Heart left ventricle (tissue), 16 donors: ENCODE measurements at regions of chr10 and their contacts with region 1.

Region 1: DNA sequence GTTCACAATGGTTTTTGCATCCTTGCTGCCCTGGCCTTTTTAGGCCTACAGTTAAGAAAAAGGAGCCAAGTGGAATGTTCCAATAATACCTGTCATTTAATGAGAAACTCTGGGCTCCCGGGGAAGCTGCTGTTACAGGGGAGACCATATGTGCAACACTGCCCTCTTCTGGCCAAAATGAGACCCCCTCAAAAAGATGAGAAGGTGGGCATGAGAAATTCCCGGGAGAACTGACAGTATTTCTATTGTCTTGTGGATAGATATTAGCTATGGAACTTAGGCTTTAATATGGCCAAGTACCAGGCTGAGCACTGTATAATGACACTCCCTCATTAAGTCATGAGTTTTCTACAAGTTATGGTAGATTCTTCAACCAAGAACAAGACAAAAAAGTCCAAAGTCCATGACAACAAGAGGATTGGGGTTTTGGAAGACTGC is 99.4 kb downstream of the CCDC3 start:
- DNase-seq: peak in 2 of 5 donors; percentile 30 to 48
- ATAC-seq: peak in 1 of 4 donors; percentile 45
- H3K4me3 ChIP-seq: no peak overlapping the region
- H3K27ac ChIP-seq: no peak overlapping the region
- H3K4me1 ChIP-seq: no peaks in the 10 kb centered on the region
- H3K27me3 ChIP-seq: no peaks in the 10 kb centered on the region
- CTCF ChIP-seq: peak; percentile 69 to 84 (median 78)
- POLR2A ChIP-seq: no peak

Region 2: DNA sequence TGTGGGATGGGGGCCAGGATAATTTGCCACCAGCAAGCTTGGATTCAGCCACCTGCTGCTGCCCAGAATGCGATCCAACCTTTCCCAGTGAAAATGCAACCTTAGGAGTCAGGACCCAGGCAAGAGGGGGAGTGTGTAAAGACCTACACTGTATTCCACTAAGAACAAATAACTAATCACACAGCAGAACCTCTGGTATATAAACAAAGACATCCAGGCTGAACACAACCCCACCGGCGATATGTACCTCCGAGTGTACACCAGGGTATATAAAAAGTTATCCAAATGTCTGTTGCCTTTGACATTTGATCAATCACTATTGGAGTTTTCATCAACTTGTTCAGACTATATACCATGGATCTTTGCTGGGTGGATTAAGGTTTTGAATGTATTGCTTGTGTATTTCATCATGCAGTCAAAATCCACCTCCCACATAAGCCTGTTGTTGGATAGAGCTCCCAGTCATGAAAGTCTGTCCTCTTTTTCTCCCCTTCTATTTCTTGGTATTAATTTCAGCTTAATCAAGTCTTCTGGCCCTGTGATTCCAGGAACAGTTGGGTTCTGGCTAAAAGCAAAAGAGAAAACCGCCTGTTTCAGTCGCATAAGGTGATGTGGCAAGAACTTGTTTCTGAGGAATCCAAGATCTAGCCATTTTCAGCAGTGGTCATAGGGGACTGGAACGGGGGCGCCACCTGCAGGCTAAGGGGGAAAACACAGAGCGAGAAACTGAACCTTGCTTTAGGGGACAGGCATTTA is 191.4 kb before region 1 on chr10:
- intact Hi-C with region 1: loop called in 6 of 10 experiments (anchors 5 to 10 kb)
- DNase-seq: peak; percentile 64 to 81 (median 69)
- ATAC-seq: peak; percentile 48 to 81 (median 74)
- H3K4me3 ChIP-seq: no peak overlapping the region
- H3K27ac ChIP-seq: peak overlapping the region in 2 of 12 donors; percentile 1 to 78
- H3K4me1 ChIP-seq: peaks cover 0 to 48% (median 23%) of the 10 kb centered on the region in 12 donors
- H3K27me3 ChIP-seq: no peaks in the 10 kb centered on the region
- CTCF ChIP-seq: peak; percentile 86 to 95 (median 90)
- POLR2A ChIP-seq: no peak

Region 3: DNA sequence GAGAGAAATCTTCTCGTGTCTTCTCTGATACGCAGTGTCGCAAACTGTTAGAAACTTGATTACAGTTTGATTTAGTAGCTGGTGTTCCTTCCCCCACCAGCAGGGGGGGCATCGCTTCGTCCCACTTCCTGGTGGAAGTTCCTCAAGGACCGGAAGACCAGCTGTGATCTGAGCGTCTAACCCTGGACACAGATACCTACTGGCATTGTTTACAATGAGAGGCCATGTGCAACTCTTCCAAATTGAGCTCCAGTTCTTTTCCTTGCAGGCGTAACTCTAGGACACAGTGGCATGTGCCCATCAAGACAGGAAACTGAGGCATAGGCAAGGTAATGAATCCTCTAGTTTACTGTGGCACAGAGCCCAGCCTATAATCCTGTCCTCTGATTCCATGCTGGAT is 119.6 kb before region 1 on chr10:
- intact Hi-C with region 1: loop called in 6 of 10 experiments (anchors 5 to 10 kb)
- DNase-seq: peak in 1 of 5 donors; percentile 37
- ATAC-seq: no peak
- H3K4me3 ChIP-seq: no peak overlapping the region
- H3K27ac ChIP-seq: no peak overlapping the region
- H3K4me1 ChIP-seq: peaks cover 0 to 5% (median 0%) of the 10 kb centered on the region in 12 donors
- H3K27me3 ChIP-seq: peaks cover 0 to 8% (median 0%) of the 10 kb centered on the region in 9 donors
- CTCF ChIP-seq: peak; percentile 49 to 73 (median 67)
- POLR2A ChIP-seq: no peak

Region 4: GRCh38 chr10:13074561-13075451 is 172.7 kb after region 1 on chr10:
- intact Hi-C with region 1: loop called in 2 of 10 experiments (anchors 10 kb)
- DNase-seq: peak; percentile 55 to 72 (median 60)
- ATAC-seq: peak in 3 of 4 donors; percentile 72 to 82 (median 80)
- H3K4me3 ChIP-seq: no peak overlapping the region
- H3K27ac ChIP-seq: no peak overlapping the region
- H3K4me1 ChIP-seq: no peaks in the 10 kb centered on the region
- H3K27me3 ChIP-seq: peaks cover 0 to 15% (median 3%) of the 10 kb centered on the region in 9 donors
- CTCF ChIP-seq: peak; percentile 66 to 90 (median 80)
- POLR2A ChIP-seq: no peak